ENCODE measurements at regions of chrX and their contacts with region 1.

Region 1: DNA sequence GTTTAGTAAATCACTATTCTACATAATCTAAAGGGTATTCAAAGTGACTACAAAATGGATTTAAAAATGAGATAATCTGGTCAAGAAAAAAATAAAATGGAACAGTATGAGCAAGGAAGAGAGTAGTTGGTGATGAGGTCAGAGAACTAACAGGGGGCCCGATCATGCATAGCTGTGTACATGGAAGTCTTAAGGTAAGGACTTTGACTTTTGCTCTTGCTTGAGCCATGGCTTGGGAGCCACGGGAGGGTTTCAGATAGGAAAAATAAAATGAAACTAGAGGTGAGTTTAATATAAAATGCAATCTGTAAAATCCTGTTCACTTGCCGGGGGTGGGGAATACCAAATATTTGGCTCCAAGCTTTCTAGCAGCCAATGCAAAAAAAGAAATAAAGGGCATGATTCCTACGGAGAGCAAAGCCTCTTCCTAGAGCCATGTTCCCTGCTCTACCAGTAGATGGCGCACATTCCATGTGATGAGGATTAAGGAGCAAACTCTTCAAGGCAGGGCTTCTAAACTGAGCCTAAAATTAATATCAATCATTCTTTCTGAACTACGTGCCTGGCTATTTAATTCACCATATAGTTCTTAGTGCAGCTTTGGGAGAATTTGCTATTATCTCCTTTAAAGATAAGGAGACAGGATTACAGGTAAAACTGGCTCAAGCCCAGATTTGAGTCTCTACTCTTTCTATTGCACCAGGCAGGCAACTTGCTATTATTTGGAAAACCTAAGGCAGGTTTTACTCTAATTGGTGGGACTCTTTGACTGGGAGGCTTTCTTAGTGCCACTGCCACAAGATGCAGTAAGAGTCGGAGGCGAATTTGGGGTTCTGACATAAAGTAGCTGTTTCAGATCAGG is 6.8 kb upstream of the CLCN5 start:
- DNase-seq: no peak
- H3K4me3 ChIP-seq: no peak overlapping the region
- H3K27ac ChIP-seq: no peak overlapping the region
- H3K4me1 ChIP-seq: peaks cover 5 to 9% (median 7%) of the 10 kb centered on the region in 4 donors
- H3K27me3 ChIP-seq: no peaks in the 10 kb centered on the region
- CTCF ChIP-seq: peak; percentile 76 to 90 (median 77)
- EP300 ChIP-seq: no peak
- POLR2A ChIP-seq: no peak

Region 2: DNA sequence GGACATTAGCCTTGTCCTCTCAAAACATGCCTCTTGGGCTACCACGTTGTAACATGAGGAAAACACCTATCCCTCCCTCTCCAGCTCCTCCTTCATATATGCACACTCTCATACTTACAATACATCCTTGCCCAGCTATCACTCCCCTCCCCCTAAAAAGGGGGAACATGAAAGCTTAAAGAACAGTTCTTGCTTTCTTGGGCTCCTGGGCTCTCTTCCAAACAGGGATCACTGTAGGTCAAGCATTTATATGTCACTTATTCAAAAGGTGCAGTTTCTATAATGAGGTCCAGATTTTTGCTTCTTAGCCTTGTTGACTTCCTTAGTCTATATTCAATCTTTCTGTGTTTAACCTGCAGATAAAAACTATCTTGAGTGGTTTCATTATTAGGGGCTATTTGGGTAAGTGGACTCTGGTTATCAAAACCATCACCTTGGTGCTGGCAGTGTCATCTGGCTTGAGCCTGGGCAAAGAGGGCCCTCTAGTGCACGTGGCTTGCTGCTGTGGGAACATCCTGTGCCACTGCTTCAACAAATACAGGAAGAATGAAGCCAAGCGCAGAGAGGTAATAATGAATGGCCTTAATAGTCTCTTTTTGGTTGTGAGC is 165.8 kb after region 1 on chrX:
- intact Hi-C with region 1: loop called (anchors 10 kb)
- DNase-seq: no peak
- H3K4me3 ChIP-seq: no peak overlapping the region
- H3K27ac ChIP-seq: no peak overlapping the region
- H3K4me1 ChIP-seq: no peaks in the 10 kb centered on the region
- H3K27me3 ChIP-seq: no peaks in the 10 kb centered on the region
- CTCF ChIP-seq: peak in 2 of 3 experiments; percentile 12 to 25
- EP300 ChIP-seq: no peak
- POLR2A ChIP-seq: no peak

Region 3: DNA sequence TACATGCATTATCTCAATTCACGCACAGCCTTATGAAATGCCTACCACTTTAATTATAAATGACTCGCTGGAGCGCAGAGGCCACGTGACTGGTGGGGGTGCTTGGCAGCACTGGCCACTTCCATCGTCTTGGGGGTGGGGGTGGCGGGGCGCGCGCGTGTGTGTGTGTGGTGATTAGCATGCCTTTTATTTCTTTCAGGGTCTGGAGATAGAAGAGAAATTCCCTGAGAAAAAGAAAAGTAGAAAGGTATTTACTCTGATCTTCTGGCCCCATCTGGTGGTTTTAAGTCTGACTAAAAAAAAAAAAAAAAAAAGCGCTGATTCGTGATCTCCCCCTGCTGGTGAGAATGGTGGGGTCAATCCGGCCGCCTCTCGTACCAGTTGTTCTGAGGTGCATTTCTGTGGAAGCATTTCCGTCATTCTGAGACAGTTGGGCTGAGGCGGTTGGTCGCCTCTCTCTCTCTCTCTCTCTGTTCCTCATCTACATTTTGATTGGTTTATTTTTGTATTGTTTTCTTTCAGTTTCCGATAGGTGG is 288.8 kb after region 1 on chrX and contains the start of gene CCNB3:
- intact Hi-C with region 1: loop called (anchors 2 kb)
- DNase-seq: no peak
- H3K4me3 ChIP-seq: peak within 1 kb of the TSS; percentile 41 to 55 (median 42)
- H3K27ac ChIP-seq: peak within 1 kb of the TSS in 2 of 4 donors; percentile 34 to 35
- H3K4me1 ChIP-seq: peaks cover 0 to 10% (median 6%) of the 10 kb centered on the region in 4 donors
- H3K27me3 ChIP-seq: no peaks in the 10 kb centered on the region
- CTCF ChIP-seq: peak; percentile 59 to 64 (median 63)
- EP300 ChIP-seq: no peak
- POLR2A ChIP-seq: no peak
- total RNA-seq, gene CCNB3: under 0.01 to 4.9 (median 3.1) TPM in 3 of 4 donors, not detected in the other

Region 4: GRCh38 chrX:50579955-50580354 is 664.4 kb after region 1 on chrX:
- intact Hi-C with region 1: loop called (anchors 5 kb)
- DNase-seq: no peak
- H3K4me3 ChIP-seq: no peak overlapping the region
- H3K27ac ChIP-seq: no peak overlapping the region
- H3K4me1 ChIP-seq: no peaks in the 10 kb centered on the region
- H3K27me3 ChIP-seq: no peaks in the 10 kb centered on the region
- CTCF ChIP-seq: peak; percentile 38 to 51 (median 45)
- EP300 ChIP-seq: no peak
- POLR2A ChIP-seq: no peak

Measured in esophagus muscularis mucosa (tissue), 4 donors.